T-cell (primary cell): ENCODE measurements at regions of chr10 and their contacts with region 1.

Region 1: GRCh38 chr10:27223964-27224363 is 16.6 kb downstream of the ACBD5 start:
- DNase-seq: peak in 24 of 35 experiments; percentile 4 to 77 (median 26)
- ATAC-seq: peak in 3 of 4 experiments; percentile 52 to 65 (median 64)
- H3K4me3 ChIP-seq: no peak overlapping the region
- H3K4me3 Mint-ChIP-seq: peak overlapping the region in 1 of 3 donors; percentile 13
- H3K27ac ChIP-seq: no peak overlapping the region
- H3K27ac Mint-ChIP-seq: peak overlapping the region; percentile 61 to 73
- H3K4me1 ChIP-seq: peaks cover 0 to 27% of the 10 kb centered on the region in 2 experiments
- H3K4me1 Mint-ChIP-seq: peaks cover 13 to 23% (median 20%) of the 10 kb centered on the region in 3 donors
- H3K27me3 ChIP-seq: no peaks in the 10 kb centered on the region
- H3K27me3 Mint-ChIP-seq: no peaks in the 10 kb centered on the region

Region 2: DNA sequence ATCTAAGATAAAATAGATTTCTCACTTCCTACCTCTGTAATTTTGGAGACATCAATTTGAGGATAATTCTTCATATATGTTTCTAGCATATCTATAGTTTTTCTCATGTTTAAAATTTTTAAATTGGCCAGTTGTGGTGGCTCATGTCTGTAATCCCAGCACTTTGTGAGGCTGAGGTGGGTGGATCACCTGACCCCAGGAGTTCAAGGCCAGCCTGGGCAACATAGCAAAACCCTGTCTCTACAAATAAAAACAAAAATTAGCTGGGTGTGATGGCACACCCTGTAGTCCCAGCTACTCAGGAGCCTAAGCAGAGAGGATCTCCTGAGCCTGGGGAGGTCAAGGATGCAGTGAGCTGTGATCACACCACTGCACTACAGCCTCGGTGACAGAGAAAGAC is 11.7 kb after region 1 on chr10:
- CTCF ChIA-PET with region 1: interaction called, 3 to 16 read pairs
- POLR2A ChIA-PET with region 1: interaction called, 3 to 8 read pairs
- DNase-seq: no peak
- ATAC-seq: no peak
- H3K4me3 ChIP-seq: no peak overlapping the region
- H3K4me3 Mint-ChIP-seq: no peak overlapping the region
- H3K27ac ChIP-seq: no peak overlapping the region
- H3K27ac Mint-ChIP-seq: no peak overlapping the region
- H3K4me1 ChIP-seq: peaks cover 7 to 21% of the 10 kb centered on the region in 2 experiments
- H3K4me1 Mint-ChIP-seq: peaks cover 23 to 26% (median 25%) of the 10 kb centered on the region in 3 donors
- H3K27me3 ChIP-seq: no peaks in the 10 kb centered on the region
- H3K27me3 Mint-ChIP-seq: no peaks in the 10 kb centered on the region

Region 3: DNA sequence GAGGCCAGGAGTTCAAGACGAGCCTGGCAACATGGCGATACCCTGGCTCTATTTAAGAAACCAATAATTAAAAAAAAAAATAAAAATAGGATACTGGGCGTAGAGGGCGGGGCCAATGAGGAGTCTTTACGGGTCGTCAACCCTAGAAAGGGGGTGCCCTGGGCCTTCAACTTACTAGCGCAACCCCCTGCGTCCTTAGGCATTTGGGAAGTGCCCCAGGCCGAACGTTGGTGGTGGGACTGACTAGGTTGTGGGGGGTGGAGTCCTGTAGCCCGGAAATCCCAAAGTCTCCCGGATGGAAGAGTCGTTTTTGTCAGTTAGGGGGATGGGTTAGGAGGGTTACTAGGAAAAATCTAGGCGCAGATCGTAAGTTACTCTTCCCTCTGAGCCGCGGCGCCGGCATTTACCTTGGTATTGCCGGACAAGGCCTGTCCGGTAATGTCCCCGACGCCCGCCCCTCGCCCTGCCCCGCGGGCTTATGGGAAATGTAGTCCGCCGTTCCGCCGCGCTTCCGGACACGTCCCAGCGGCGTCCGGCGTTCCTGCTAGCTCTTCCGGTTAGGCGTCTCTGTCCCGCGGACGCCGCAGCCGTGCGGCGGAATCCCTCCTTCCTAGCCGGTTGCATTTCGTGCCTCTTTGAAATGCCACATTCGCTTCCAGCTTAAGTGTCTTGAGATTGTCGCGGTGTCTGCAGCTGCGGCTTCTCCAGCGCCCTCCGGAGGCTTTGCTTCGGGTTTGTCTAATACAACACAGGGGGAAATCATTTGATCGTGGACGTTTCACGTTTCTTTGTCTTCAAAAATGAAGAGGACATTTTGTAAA is 17.9 kb after region 1 on chr10:
- CTCF ChIA-PET with region 1: interaction called, 3 to 21 read pairs
- POLR2A ChIA-PET with region 1: interaction called in 1 of 2 experiments, 3 read pairs
- DNase-seq: peak; percentile 66 to 94 (median 80)
- ATAC-seq: peak; percentile 69 to 80 (median 74)
- H3K4me3 ChIP-seq: peak overlapping the region; percentile 96
- H3K4me3 Mint-ChIP-seq: peak overlapping the region; percentile 93 to 98 (median 98)
- H3K27ac ChIP-seq: peak overlapping the region; percentile 97
- H3K27ac Mint-ChIP-seq: peak overlapping the region; percentile 96 to 99
- H3K4me1 ChIP-seq: peaks cover 15 to 39% of the 10 kb centered on the region in 2 experiments
- H3K4me1 Mint-ChIP-seq: peaks cover 36 to 43% (median 37%) of the 10 kb centered on the region in 3 donors
- H3K27me3 ChIP-seq: no peaks in the 10 kb centered on the region
- H3K27me3 Mint-ChIP-seq: no peaks in the 10 kb centered on the region

Region 4: GRCh38 chr10:27252267-27253000 is 28.5 kb after region 1 on chr10:
- CTCF ChIA-PET with region 1: interaction called in 1 of 2 experiments, 13 read pairs
- POLR2A ChIA-PET with region 1: no interaction called
- DNase-seq: peak; percentile 53 to 85 (median 73)
- ATAC-seq: peak; percentile 95 to 99 (median 99)
- H3K4me3 ChIP-seq: peak overlapping the region; percentile 54 to 58
- H3K4me3 Mint-ChIP-seq: peak overlapping the region; percentile 73 to 86 (median 79)
- H3K27ac ChIP-seq: peak overlapping the region; percentile 71
- H3K27ac Mint-ChIP-seq: peak overlapping the region; percentile 79 to 87
- H3K4me1 ChIP-seq: peaks cover 0 to 19% of the 10 kb centered on the region in 2 experiments
- H3K4me1 Mint-ChIP-seq: peaks cover 11 to 15% (median 13%) of the 10 kb centered on the region in 3 donors
- H3K27me3 ChIP-seq: peaks cover 0 to 9% of the 10 kb centered on the region in 2 experiments
- H3K27me3 Mint-ChIP-seq: peaks cover under 1 to 3% of the 10 kb centered on the region in 2 donors

Region 5: GRCh38 chr10:27285108-27285507 is 61.1 kb after region 1 on chr10:
- CTCF ChIA-PET with region 1: interaction called, 3 to 17 read pairs
- POLR2A ChIA-PET with region 1: interaction called in 1 of 2 experiments, 3 read pairs
- DNase-seq: peak in 31 of 35 experiments; percentile 1 to 64 (median 20)
- ATAC-seq: peak in 3 of 4 experiments; percentile 65 to 76 (median 66)
- H3K4me3 ChIP-seq: no peak overlapping the region
- H3K4me3 Mint-ChIP-seq: no peak overlapping the region
- H3K27ac ChIP-seq: no peak overlapping the region
- H3K27ac Mint-ChIP-seq: no peak overlapping the region
- H3K4me1 ChIP-seq: no peaks in the 10 kb centered on the region
- H3K4me1 Mint-ChIP-seq: peaks cover 0 to 2% (median 0%) of the 10 kb centered on the region in 3 donors
- H3K27me3 ChIP-seq: no peaks in the 10 kb centered on the region
- H3K27me3 Mint-ChIP-seq: no peaks in the 10 kb centered on the region

Region 6: GRCh38 chr10:27360581-27361172 is 136.7 kb after region 1 on chr10:
- CTCF ChIA-PET with region 1: interaction called, 11 to 28 read pairs
- POLR2A ChIA-PET with region 1: interaction called in 1 of 2 experiments, 4 read pairs
- DNase-seq: peak; percentile 64 to 91 (median 78)
- ATAC-seq: peak; percentile 87 to 98 (median 94)
- H3K4me3 ChIP-seq: no peak overlapping the region
- H3K4me3 Mint-ChIP-seq: no peak overlapping the region
- H3K27ac ChIP-seq: no peak overlapping the region
- H3K27ac Mint-ChIP-seq: no peak overlapping the region
- H3K4me1 ChIP-seq: no peaks in the 10 kb centered on the region
- H3K4me1 Mint-ChIP-seq: no peaks in the 10 kb centered on the region
- H3K27me3 ChIP-seq: no peaks in the 10 kb centered on the region
- H3K27me3 Mint-ChIP-seq: no peaks in the 10 kb centered on the region